WTC11 (cell line): ENCODE measurements at regions of chr1 and their contacts with region 1.

Region 1: DNA sequence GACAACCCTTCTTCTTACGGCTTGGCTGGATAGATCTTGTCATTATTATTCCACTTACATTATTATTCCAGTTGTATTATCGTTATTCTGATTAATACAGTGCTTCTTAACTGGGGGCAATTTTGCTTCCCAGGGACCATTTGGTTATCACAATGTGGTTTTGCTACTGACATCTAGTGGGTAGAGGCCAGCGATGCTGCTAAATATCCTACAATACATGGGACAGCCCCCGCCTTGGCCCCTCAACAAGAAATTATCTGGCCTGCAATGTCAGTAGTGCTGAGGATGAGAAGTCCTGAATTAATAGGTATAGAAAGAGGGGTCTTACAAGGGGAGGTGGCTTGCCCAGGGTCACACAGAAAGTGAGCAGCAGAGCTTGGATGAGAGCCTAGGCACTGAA is 105.6 kb downstream of the PTPRU start:
- DNase-seq: no peak
- ATAC-seq: 0 out of 2 replicates have a peak, but pooled peaks have one; percentile 15
- H3K4me3 Mint-ChIP-seq: no peak overlapping the region
- H3K27ac Mint-ChIP-seq: no peak overlapping the region
- H3K4me1 Mint-ChIP-seq: peaks cover 33% of the 10 kb centered on the region
- H3K27me3 Mint-ChIP-seq: peaks cover 5% of the 10 kb centered on the region; the same call in 1 of the 2 replicates
- CTCF ChIP-seq: no peak

Region 2: DNA sequence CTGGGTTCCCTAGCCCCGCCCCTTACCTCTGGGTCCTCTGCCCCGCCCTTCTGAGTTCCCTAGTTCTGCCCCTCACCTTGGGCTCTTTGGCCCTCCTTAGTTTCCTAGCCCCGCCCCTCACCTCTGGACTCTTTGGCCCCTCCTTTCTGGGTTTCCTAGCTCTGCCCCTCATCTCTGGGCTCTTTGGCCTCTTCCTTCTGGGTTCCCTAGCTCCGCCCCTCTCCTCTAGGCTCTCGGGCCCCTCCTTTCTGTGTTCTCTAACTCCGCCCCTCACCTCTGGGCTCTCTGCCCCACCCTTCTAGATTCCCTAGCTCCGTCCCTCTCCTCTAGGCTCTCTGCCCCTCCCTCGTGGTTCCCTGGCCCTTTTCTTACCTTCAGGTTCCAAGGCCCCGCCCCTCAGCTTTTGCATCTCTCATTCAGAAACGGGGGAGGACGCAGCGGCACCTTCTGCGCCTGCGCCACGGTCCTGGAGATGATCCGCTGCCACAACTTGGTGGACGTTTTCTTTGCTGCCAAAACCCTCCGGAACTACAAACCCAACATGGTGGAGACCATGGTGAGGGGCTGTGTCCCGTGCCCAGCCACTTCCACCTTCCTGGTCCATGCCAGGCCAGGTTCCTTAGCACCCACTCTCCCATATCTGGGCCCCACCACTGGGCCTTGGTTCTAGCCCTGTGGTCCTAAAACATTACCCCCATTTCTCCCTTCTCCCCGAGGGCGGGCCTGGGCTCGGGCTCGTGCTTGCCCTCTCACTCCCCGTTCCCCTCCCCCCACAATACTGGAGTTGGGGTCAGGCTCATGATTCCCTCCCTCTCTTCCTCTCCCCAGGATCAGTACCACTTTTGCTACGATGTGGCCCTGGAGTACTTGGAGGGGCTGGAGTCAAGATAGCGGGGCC is 16.9 kb before region 1 on chr1:
- CTCF ChIA-PET with region 1: interaction called, 50 read pairs
- POLR2A ChIA-PET with region 1: no interaction called
- DNase-seq: peak; percentile 99
- ATAC-seq: peak; percentile 97
- H3K4me3 Mint-ChIP-seq: peak overlapping the region; percentile 64
- H3K27ac Mint-ChIP-seq: peak overlapping the region; percentile 36
- H3K4me1 Mint-ChIP-seq: peaks cover 17% of the 10 kb centered on the region
- H3K27me3 Mint-ChIP-seq: no peaks in the 10 kb centered on the region
- CTCF ChIP-seq: no peak

Region 3: GRCh38 chr1:29356663-29357062 is 14.7 kb after region 1 on chr1:
- CTCF ChIA-PET with region 1: interaction called, 14 read pairs
- POLR2A ChIA-PET with region 1: interaction called, 3 read pairs
- DNase-seq: peak; percentile 74
- ATAC-seq: peak; percentile 98
- H3K4me3 Mint-ChIP-seq: no peak overlapping the region
- H3K27ac Mint-ChIP-seq: no peak overlapping the region
- H3K4me1 Mint-ChIP-seq: peaks cover 11% of the 10 kb centered on the region
- H3K27me3 Mint-ChIP-seq: peaks cover 17% of the 10 kb centered on the region
- CTCF ChIP-seq: no peak